Psoas muscle (tissue), 8 donors: ENCODE measurements at regions of chr5 and their contacts with region 1.

Region 1: DNA sequence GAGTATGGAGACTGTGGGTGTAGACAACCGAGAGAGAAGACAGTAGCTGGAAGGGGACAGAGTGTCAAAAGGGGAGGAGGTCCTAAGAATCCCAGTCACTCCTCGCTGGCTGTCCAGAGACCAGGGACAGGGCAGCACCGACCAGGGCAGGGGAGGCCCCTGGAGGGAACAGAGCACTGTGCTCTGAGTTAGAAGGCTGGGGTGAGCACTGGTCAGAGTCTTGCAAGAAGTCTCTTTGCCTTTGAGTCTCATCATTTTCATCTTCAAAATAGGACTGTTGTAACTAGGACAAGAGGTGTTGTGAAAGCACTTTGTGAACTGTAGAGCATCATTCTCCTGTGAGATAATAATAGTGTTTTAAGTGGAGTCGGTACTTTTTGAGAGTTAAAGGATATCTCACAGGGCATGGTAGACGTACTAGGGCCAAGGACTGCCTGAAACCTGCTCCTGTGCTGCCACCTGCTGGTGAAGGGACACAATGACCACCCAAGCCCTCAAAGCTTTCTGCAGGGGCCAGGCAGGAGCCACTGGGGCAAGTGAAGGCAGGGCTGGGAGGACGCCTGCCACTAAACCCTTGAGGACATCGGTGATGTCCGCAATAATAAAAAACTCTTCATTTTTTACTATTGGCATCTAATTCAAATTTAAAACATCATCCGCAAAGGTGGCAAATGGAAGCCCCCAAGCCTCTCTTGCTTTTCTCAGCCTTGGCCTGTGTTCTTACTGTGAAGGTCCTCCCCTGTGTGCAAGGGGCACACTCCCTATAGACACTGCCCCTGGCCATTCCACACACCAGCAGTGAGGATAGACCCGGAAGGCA is 28.2 kb downstream of the SLC6A7 start:
- DNase-seq: peak; percentile 85 to 90
- ATAC-seq: peak; percentile 85 to 94 (median 88)
- H3K4me3 ChIP-seq: no peak overlapping the region
- H3K27ac ChIP-seq: no peak overlapping the region
- H3K4me1 ChIP-seq: no peaks in the 10 kb centered on the region
- H3K27me3 ChIP-seq: no peaks in the 10 kb centered on the region
- CTCF ChIP-seq: peak; percentile 97

Region 2: GRCh38 chr5:150022163-150022540 is 195.9 kb before region 1 on chr5:
- intact Hi-C with region 1: loop called in 1 of 2 experiments (anchors 5 kb)
- DNase-seq: no peak
- ATAC-seq: peak; percentile 66 to 83 (median 76)
- H3K4me3 ChIP-seq: peak overlapping the region; percentile 19
- H3K27ac ChIP-seq: peak overlapping the region; percentile 79
- H3K4me1 ChIP-seq: peaks cover 26% of the 10 kb centered on the region
- H3K27me3 ChIP-seq: no peaks in the 10 kb centered on the region
- CTCF ChIP-seq: no peak

Region 3: GRCh38 chr5:150129813-150130492 is 88.1 kb before region 1 on chr5:
- intact Hi-C with region 1: loop called in 1 of 2 experiments (anchors 1 kb)
- DNase-seq: peak; percentile 76 to 86
- ATAC-seq: peak; percentile 85 to 92 (median 89)
- H3K4me3 ChIP-seq: peak overlapping the region; percentile 39
- H3K27ac ChIP-seq: no peak overlapping the region
- H3K4me1 ChIP-seq: no peaks in the 10 kb centered on the region
- H3K27me3 ChIP-seq: no peaks in the 10 kb centered on the region
- CTCF ChIP-seq: peak; percentile 91

Region 4: DNA sequence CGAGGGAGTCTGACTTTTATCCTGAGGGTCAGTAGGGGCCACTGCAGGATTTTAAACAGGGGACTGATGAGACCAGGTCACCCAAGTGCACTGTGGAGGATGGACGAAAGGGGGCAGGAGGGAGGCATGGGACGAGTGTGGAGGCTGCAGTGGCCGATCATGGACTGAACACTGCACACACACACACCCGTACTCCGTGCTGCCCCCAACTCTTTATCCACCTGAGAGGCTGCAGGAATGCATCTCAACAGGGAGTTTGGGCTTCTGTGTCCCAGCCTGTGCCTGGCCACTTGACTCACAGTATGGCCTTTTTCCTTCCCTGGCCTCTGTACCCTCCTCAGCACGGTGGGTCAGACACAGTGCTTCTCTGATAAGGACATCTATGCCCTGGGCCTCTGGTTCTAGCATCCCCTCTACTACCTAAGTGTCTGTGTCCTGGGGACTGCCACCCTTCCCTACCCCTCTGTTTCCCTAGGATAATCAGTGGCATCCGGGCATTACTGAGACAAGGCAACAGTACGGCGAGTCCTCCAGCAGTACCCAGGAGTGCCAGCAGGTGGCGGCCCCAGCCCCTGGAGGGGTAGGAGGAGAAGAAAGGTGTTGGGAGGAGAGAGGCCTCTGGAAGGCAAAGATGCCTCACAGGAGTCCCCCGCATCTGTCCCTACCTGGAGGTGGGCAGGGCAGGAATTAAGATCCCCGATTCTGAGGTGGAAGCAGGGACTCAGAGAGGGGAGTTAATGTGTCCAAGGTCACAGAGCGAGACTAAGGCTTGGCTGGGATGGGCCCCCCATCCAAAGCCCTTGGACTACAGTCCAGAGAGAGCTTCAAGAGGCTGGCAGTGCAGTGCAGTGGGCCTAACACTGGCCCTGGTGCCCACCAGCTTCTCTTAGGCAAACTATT is 56.6 kb before region 1 on chr5:
- intact Hi-C with region 1: loop called (anchors 1 to 2 kb)
- DNase-seq: peak; percentile 85 to 92
- ATAC-seq: peak; percentile 80 to 92 (median 88)
- H3K4me3 ChIP-seq: no peak overlapping the region
- H3K27ac ChIP-seq: peak overlapping the region; percentile 55
- H3K4me1 ChIP-seq: peaks cover 19% of the 10 kb centered on the region
- H3K27me3 ChIP-seq: no peaks in the 10 kb centered on the region
- CTCF ChIP-seq: peak; percentile 98

Region 5: GRCh38 chr5:150245111-150245789 is 27.2 kb after region 1 on chr5:
- intact Hi-C with region 1: loop called in 1 of 2 experiments (anchors 1 kb)
- DNase-seq: peak; percentile 83 to 95
- ATAC-seq: peak; percentile 83 to 90 (median 86)
- H3K4me3 ChIP-seq: peak overlapping the region; percentile 73
- H3K27ac ChIP-seq: peak overlapping the region; percentile 100
- H3K4me1 ChIP-seq: peaks cover 48% of the 10 kb centered on the region
- H3K27me3 ChIP-seq: no peaks in the 10 kb centered on the region
- CTCF ChIP-seq: no peak

Region 6: GRCh38 chr5:150544611-150545219 is 326.6 kb after region 1 on chr5:
- intact Hi-C with region 1: no loop called
- DNase-seq: peak; percentile 77 to 88
- ATAC-seq: peak; percentile 84 to 92 (median 88)
- H3K4me3 ChIP-seq: no peak overlapping the region
- H3K27ac ChIP-seq: no peak overlapping the region
- H3K4me1 ChIP-seq: peaks cover 10% of the 10 kb centered on the region
- H3K27me3 ChIP-seq: no peaks in the 10 kb centered on the region
- CTCF ChIP-seq: peak; percentile 82